Heart right ventricle (tissue), 16 donors: ENCODE measurements at regions of chr12 and their contacts with region 1.

Region 1: DNA sequence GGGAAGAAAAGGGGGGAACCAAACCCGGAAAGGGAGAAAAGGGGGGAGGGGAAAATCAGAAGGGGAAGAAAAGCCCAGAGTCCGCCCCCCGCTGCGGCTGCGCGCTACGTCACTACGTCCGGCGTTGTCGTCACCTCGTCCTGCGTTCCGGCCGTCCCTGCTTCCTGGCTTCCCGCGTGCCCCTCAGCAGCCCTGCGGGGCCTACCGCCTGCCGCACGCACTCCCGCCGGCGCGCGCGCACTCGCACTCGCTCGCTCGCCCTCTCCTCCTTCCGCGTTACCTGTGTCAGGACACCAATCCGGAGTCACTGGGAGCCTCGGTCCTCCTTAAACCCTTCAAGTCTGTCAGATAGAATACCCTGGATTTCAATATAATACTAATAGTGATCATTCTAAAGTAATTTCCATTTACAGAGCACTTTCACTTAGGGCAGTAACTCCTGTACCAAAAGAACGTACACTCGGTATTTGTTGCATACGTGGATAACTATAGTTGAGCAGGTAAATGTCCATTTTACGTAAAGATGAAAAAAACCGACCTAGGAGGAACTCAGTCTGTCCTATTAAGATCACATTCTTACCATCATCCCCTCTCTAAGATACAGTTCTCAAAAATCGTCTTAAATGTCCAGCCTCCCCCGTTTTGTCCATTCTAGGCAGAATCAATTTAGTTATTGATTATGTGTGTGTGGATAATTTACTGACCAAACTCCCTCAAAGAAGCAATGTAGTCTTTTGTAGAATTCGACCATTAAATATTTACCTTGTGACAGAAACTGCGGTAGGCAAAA is at the start of gene R3HDM2:
- DNase-seq: peak; percentile 96
- ATAC-seq: peak; percentile 96 to 99 (median 98)
- H3K4me3 ChIP-seq: peak within 1 kb of the TSS; percentile 42 to 80 (median 66)
- H3K27ac ChIP-seq: peak within 1 kb of the TSS; percentile 85 to 98 (median 94)
- H3K4me1 ChIP-seq: peaks cover 0 to 24% (median 15%) of the 10 kb centered on the region in 9 donors
- H3K27me3 ChIP-seq: no peaks in the 10 kb centered on the region
- CTCF ChIP-seq: no peak
- total RNA-seq, gene R3HDM2: 43.7 to 107 (median 82.9) TPM

Region 2: GRCh38 chr12:55789171-55789570 is 1642.0 kb before region 1 on chr12:
- intact Hi-C with region 1: no loop called
- DNase-seq: no peak
- ATAC-seq: no peak
- H3K4me3 ChIP-seq: no peak overlapping the region
- H3K27ac ChIP-seq: no peak overlapping the region
- H3K4me1 ChIP-seq: no peaks in the 10 kb centered on the region
- H3K27me3 ChIP-seq: no peaks in the 10 kb centered on the region
- CTCF ChIP-seq: no peak

Region 3: DNA sequence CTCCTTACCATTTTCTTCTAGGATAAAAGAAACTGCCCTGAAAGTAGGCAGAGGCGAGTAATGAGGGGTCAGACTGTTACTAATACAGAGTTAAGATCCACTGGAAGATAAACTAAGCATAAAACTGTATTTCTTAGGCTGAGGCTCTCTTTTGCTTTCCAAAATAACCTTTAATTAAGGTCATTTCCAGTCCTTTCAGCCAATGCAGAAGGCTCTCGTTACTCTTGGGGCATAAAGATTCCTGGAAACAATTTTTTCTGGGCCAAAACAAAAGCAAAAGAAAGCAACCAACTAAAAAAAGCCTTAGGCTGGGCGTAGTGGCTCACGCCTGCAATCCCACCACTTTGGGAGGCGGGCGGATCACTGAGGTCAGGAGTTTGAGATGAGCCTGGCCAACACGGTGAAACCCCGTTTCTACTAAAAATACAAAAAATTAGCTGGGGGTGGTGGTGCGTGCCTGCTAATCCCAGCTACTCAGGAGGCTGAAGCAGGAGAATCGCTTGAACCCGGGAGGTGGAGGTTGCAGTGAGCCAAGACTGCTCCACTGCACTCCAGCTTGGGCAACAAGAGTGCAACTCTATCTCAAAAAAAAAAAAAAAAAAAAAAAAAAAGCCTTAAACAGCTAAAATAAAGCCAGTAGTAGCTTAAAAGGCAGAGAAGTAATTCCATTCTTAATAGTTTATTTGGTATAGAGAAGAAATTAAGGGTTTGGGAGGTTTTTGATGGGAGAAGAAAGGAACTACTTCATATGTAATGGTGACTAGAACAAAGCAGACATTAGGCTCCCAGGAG is 111.3 kb before region 1 on chr12:
- intact Hi-C with region 1: loop called in 1 of 10 experiments (anchors 5 kb)
- DNase-seq: peak in 1 of 2 donors; percentile 25
- ATAC-seq: peak in 3 of 8 donors; percentile 38 to 77 (median 71)
- H3K4me3 ChIP-seq: peak overlapping the region in 3 of 10 donors; percentile 12 to 28 (median 20)
- H3K27ac ChIP-seq: peak overlapping the region in 4 of 10 donors; percentile 11 to 68 (median 56)
- H3K4me1 ChIP-seq: peaks cover 0 to 23% (median 0%) of the 10 kb centered on the region in 9 donors
- H3K27me3 ChIP-seq: no peaks in the 10 kb centered on the region
- CTCF ChIP-seq: no peak